ENCODE measurements at regions of chr6 and their contacts with region 1.

Region 1: DNA sequence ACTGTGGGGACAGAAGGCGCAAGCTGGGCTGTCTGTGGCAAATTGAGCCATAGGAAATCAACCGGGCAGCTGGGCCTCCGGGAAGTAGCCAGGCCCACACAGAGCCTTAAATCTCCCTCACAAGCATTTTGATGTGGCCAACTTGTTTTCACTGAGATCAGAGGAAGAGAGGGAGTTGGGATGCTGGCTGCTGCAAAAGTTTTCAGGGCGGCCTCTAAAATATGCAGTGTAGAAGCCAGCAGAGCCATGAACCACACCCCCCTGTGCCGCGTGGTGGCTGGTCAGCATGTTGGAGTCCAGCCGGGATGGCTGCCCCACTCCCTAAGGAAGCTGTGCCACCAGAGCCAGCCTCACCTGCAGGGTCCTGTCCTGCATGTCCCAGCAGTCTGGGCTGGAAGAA is 167.4 kb downstream of the CDC5L start:
- DNase-seq: no peak
- H3K4me3 ChIP-seq: no peak overlapping the region
- H3K27ac ChIP-seq: no peak overlapping the region
- H3K4me1 ChIP-seq: peaks cover 0 to 10% (median 0%) of the 10 kb centered on the region in 4 donors
- H3K27me3 ChIP-seq: peaks cover 6% of the 10 kb centered on the region
- CTCF ChIP-seq: no peak
- EP300 ChIP-seq: no peak
- POLR2A ChIP-seq: no peak

Region 2: DNA sequence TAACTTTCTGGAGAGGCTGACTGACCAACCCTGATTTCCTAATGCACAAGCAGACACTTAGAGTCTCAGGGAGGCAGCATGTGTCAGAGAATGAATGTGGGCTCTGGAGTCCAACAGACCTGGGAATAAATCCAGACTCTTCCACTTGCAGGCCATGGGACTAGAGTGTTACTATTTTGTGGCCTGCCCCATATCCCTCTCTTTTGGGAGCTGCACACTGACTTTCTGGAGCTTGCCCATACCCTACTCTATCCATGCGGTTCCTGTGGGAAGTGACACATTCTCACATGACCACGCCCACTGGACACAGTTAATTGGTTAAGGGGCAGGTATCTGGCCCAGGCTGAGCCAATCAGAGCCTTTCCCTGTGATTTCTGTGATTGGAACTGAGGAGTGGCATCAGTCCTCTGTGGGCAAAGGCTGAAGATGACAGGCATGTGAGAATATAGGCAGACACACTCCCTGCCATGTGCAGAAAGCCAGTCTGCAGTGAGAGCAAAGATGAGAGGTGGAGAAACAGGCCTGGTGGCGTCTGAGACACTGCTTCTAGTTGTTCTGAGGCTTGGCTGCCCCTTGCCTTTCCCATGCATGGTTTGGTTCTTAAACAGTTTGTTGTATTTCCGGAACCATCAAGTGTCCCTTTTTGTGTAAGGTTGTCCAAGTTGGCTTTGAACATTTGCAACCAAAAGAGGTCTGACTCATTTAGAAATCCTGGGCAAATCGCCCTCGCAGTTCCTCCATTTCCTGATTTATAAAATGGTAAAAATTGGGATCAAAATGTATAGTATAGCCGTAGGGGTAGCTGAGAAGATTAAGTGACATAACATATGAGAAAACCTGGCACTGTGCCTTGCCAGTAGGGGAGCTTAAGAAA is 41.8 kb before region 1 on chr6:
- in situ Hi-C with region 1: no loop called
- intact Hi-C with region 1: loop called (anchors 1 kb)
- DNase-seq: no peak
- H3K4me3 ChIP-seq: no peak overlapping the region
- H3K27ac ChIP-seq: no peak overlapping the region
- H3K4me1 ChIP-seq: no peaks in the 10 kb centered on the region
- H3K27me3 ChIP-seq: no peaks in the 10 kb centered on the region
- CTCF ChIP-seq: no peak
- EP300 ChIP-seq: no peak
- POLR2A ChIP-seq: no peak

Region 3: DNA sequence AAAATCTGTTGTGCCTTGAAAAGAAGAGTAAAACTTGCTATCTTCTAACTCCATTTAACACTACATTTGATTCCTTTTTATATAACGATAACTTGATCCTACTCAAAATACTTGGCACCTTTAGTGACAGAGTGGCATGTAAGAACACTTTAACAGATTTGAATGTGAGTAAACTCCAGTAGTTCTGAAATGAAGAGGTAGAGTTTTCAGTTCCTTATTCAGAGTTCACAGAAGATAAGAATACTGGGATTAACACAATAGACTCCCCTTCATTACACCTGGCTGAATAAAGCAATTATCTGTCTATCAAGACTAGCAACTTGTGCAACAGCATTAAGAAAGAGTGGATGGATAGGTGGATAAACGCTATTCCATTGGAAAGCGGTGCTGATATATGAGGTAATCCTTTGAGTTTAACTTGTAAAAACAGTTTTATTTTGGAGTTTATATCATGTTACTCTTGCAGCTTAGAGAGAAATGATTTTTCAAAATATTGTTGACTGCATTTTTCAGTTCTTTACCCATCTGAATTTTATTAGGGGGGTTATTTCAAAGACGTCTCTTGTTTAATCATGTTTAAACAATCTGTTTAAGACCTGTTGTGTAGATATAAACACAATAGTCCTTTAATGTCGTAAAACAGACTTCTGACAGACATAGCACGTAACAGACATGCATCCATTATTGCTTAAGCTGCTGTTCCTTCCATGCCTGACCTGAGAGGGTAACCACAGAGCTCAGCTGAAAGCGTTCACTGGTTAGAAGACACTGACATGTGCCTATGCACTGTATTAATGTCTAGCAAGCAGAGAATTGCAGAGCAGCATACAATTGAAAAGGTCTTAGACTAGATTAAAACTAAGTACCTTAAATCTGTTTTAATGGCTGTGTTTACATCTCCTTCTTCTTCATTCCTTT is 925.2 kb after region 1 on chr6:
- in situ Hi-C with region 1: no loop called
- intact Hi-C with region 1: no loop called
- DNase-seq: no peak
- H3K4me3 ChIP-seq: no peak overlapping the region
- H3K27ac ChIP-seq: peak overlapping the region in 1 of 4 donors; percentile 6
- H3K4me1 ChIP-seq: peaks cover 5 to 19% (median 15%) of the 10 kb centered on the region in 4 donors
- H3K27me3 ChIP-seq: no peaks in the 10 kb centered on the region
- CTCF ChIP-seq: no peak
- EP300 ChIP-seq: no peak
- POLR2A ChIP-seq: no peak

Measured in transverse colon (tissue), 4 donors.